MCF 10A (cell line): ENCODE measurements at regions of chr12 and their contacts with region 1.

Region 1: GRCh38 chr12:96889273-96889933 is 17.7 kb upstream of the NEDD1 start:
- DNase-seq: peak; percentile 66
- H3K4me3 Mint-ChIP-seq: no peak overlapping the region
- H3K27ac Mint-ChIP-seq: peak overlapping the region; percentile 79
- H3K4me1 Mint-ChIP-seq: peaks cover 25% of the 10 kb centered on the region
- H3K27me3 Mint-ChIP-seq: no peaks in the 10 kb centered on the region
- CTCF ChIP-seq: no peak

Region 2: DNA sequence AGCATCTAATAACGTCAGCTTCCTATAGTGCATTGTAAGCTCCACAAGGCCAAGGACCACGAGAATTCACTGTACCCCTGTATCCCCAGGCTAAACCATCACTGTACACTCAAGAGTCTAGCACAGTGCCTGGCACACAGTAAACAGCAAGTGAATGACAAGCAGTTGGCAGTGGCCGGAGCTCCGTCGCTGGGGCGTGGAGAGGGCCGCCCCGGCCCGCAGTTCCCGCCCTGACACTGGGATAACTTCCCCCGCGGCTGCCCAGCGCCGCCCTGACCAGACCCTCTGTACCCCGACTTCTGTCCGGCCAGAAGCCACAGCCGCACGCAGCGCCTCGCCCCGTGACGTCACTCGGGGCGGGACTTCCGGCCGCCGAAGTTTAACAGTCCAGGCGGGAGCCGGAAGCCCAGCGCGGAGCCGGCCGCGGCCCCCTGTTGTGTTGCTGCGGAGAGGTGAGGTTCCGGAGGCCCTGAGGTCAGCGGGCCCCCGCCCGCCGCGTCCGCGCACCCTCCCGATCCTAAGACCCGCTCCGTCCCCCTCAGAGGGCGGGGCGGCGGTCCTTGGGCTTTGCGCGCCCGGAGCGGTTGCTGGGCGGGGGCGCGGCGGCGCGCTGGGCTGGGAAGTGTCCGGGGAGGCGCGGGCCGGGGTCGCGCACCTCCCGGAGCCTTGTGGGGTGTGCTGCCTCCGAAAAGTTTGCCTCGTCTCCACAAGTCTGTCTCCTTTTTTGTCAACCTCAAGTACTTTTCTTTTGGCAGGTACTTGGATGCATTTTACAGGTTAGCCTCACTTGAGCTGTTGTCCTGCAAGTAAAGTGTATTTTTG is 17.7 kb after region 1 on chr12 and contains the start of gene NEDD1:
- CTCF ChIA-PET with region 1: no interaction called
- POLR2A ChIA-PET with region 1: interaction called, 17 read pairs
- intact Hi-C with region 1: no loop called
- DNase-seq: peak; percentile 81
- H3K4me3 Mint-ChIP-seq: peak within 1 kb of the TSS; percentile 89
- H3K27ac Mint-ChIP-seq: peak within 1 kb of the TSS; percentile 97
- H3K4me1 Mint-ChIP-seq: peaks cover 27% of the 10 kb centered on the region
- H3K27me3 Mint-ChIP-seq: no peaks in the 10 kb centered on the region
- CTCF ChIP-seq: no peak
- total RNA-seq, gene NEDD1: 23.0 and 23.5 TPM in 2 replicates